Tibial artery (tissue), 4 donors: ENCODE measurements at regions of chr16 and their contacts with region 1.

Region 1: DNA sequence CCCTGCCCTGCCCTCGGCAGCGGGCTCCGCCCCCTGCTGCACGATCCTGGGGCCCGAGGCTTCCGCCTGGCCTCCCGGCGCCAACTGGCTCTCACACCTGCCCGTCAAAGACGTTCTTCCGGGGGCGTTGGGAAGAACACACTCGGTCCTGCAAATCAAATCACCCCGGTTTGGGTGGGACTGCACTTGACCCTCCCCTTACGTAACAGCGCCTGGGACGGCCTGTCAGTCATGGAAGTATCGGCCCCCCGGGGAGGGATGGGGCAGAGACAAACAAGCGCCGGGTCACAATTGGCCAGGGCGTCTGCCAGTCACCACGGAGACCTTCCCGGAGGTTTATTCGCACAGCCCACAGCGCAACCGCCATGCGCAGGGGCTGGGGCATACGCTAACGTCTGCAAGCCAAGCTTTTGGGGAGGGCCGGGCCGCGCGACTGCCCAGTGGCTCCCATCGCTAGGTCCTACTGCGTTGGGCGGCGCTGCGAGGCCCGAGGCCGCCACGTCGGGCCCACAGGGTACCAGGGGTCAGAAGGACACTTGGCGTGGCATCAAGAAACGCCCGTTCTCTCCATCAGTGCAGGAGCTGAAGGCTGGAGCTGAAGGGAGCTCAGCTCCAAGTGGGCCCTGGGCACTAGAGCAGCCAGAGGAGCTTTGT is 388 bp upstream of the AKTIP start:
- DNase-seq: peak; percentile 100
- H3K4me3 ChIP-seq: peak overlapping the region; percentile 65 to 97
- H3K27ac ChIP-seq: peak overlapping the region; percentile 91 to 94
- H3K4me1 ChIP-seq: peaks cover 0 to 35% (median 26%) of the 10 kb centered on the region in 4 donors
- H3K27me3 ChIP-seq: no peaks in the 10 kb centered on the region
- CTCF ChIP-seq: peak in 1 of 2 experiments; percentile 11

Region 2: GRCh38 chr16:52837251-52837650 is 666.1 kb before region 1 on chr16:
- intact Hi-C with region 1: no loop called
- DNase-seq: no peak
- H3K4me3 ChIP-seq: no peak overlapping the region
- H3K27ac ChIP-seq: no peak overlapping the region
- H3K4me1 ChIP-seq: no peaks in the 10 kb centered on the region
- H3K27me3 ChIP-seq: no peaks in the 10 kb centered on the region
- CTCF ChIP-seq: no peak

Region 3: GRCh38 chr16:53435066-53435688 is 68.2 kb before region 1 on chr16:
- intact Hi-C with region 1: loop called (anchors 5 kb)
- DNase-seq: peak; percentile 89 to 90
- H3K4me3 ChIP-seq: peak overlapping the region; percentile 97 to 99
- H3K27ac ChIP-seq: peak overlapping the region; percentile 98 to 99
- H3K4me1 ChIP-seq: peaks cover 0 to 35% (median 15%) of the 10 kb centered on the region in 4 donors
- H3K27me3 ChIP-seq: no peaks in the 10 kb centered on the region
- CTCF ChIP-seq: peak in 1 of 2 experiments; percentile 6

Region 4: GRCh38 chr16:53457670-53458069 is 45.7 kb before region 1 on chr16:
- intact Hi-C with region 1: no loop called
- DNase-seq: no peak
- H3K4me3 ChIP-seq: no peak overlapping the region
- H3K27ac ChIP-seq: no peak overlapping the region
- H3K4me1 ChIP-seq: no peaks in the 10 kb centered on the region
- H3K27me3 ChIP-seq: no peaks in the 10 kb centered on the region
- CTCF ChIP-seq: no peak